ENCODE measurements at regions of chr10 and their contacts with region 1.

Region 1: DNA sequence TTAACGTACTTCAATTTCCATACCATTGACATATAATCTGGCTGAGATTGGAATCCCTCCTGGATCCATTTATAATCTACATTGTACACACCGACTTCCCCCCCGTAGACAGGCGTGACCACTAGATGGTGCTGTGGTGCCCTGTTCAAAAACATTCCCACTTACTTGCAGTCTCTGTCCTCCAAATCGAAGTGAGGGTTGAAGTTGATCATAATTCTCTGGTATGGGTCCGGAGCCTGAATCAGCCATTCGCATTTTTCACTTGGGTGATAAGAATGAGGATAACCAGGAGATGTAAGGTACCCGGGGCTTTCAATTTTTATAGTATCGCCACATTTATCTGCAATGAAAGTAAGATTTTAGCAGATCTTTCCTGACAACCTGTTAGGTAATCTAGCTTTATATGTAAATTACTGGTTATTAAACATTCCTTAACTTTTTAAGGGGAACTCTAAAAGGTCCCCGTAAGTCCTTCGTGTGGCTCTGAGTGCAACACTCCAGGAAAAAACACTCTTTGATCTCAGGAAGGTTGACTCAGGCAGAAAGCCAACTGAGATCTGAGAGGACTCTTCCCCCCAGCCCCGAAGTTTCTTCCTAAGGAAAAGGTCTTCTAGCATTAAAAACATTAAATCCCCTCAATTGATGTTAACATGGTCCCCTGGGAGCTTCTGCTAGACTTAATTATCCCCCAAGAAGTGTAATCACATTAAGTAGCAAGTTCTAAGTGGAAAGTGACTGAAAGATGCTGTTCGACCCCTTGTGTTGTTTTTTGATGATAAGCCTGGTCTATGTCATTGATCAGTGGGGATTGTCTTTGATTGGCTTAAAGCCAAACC is 3.7 kb downstream of the NRP1 start:
- DNase-seq: peak; percentile 87 to 89 (median 87)
- ATAC-seq: peak; percentile 9 to 35 (median 25)
- H3K4me3 ChIP-seq: peak overlapping the region; percentile 53 to 92 (median 88)
- H3K27ac ChIP-seq: peak overlapping the region in 11 of 12 donors; percentile 95 to 100 (median 98)
- H3K4me1 ChIP-seq: peaks cover 3 to 53% (median 40%) of the 10 kb centered on the region in 12 donors
- H3K27me3 ChIP-seq: no peaks in the 10 kb centered on the region
- CTCF ChIP-seq: peak; percentile 87 to 96 (median 91)
- POLR2A ChIP-seq: no peak

Region 2: GRCh38 chr10:33273295-33274002 is 57.3 kb before region 1 on chr10:
- intact Hi-C with region 1: loop called in 5 of 10 experiments (anchors 5 to 10 kb)
- DNase-seq: peak; percentile 87 to 95 (median 88)
- ATAC-seq: peak; percentile 89 to 96 (median 94)
- H3K4me3 ChIP-seq: peak overlapping the region in 10 of 12 donors; percentile 17 to 43 (median 36)
- H3K27ac ChIP-seq: peak overlapping the region; percentile 54 to 93 (median 88)
- H3K4me1 ChIP-seq: peaks cover 16 to 86% (median 68%) of the 10 kb centered on the region in 12 donors
- H3K27me3 ChIP-seq: no peaks in the 10 kb centered on the region
- CTCF ChIP-seq: peak in 4 of 12 donors; percentile 1 to 38 (median 28)
- POLR2A ChIP-seq: peak in 1 of 2 donors; percentile 49

Region 3: GRCh38 chr10:33674986-33675599 is 344.3 kb after region 1 on chr10:
- intact Hi-C with region 1: loop called in 2 of 10 experiments (anchors 5 to 10 kb)
- DNase-seq: peak in 1 of 5 donors; percentile 24
- ATAC-seq: peak in 3 of 4 donors; percentile 38 to 82 (median 51)
- H3K4me3 ChIP-seq: peak overlapping the region in 6 of 12 donors; percentile 8 to 46 (median 27)
- H3K27ac ChIP-seq: peak overlapping the region in 11 of 12 donors; percentile 12 to 78 (median 64)
- H3K4me1 ChIP-seq: peaks cover 0 to 28% (median 10%) of the 10 kb centered on the region in 12 donors
- H3K27me3 ChIP-seq: no peaks in the 10 kb centered on the region
- CTCF ChIP-seq: no peak
- POLR2A ChIP-seq: no peak

Region 4: DNA sequence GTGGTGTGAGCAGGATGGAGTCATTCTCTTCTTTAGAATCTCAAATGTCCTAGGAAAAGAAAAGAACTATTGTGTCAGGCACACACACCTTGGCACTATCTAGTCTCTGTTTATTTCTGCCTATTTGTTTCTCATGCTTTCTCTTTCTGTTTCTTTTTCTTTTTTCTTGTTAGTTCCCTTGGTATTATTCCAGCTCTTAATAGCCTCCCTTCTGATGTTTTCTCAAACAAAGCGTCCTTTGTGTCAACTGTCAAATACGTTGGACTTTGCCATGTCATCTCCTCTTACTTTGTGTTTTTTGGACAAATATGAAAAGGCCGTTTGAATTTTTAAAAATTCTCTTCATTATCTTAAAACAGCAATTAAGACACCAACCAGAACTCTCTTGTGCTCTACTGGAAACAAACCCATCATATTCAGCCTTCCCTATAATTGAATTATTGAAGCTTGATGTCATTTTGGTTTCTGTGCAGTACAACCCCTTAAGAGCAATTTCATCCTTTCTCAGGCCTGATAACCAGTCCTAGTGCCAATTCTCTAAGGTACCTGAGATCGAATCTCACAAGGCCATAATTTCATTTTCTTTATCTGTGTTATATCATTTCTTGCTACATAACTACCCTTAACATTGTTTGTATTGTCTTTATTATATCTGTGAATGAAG is 501.5 kb after region 1 on chr10:
- intact Hi-C with region 1: loop called in 1 of 10 experiments (anchors 10 kb)
- DNase-seq: no peak
- ATAC-seq: no peak
- H3K4me3 ChIP-seq: no peak overlapping the region
- H3K27ac ChIP-seq: no peak overlapping the region
- H3K4me1 ChIP-seq: no peaks in the 10 kb centered on the region
- H3K27me3 ChIP-seq: no peaks in the 10 kb centered on the region
- CTCF ChIP-seq: no peak
- POLR2A ChIP-seq: no peak

Region 5: DNA sequence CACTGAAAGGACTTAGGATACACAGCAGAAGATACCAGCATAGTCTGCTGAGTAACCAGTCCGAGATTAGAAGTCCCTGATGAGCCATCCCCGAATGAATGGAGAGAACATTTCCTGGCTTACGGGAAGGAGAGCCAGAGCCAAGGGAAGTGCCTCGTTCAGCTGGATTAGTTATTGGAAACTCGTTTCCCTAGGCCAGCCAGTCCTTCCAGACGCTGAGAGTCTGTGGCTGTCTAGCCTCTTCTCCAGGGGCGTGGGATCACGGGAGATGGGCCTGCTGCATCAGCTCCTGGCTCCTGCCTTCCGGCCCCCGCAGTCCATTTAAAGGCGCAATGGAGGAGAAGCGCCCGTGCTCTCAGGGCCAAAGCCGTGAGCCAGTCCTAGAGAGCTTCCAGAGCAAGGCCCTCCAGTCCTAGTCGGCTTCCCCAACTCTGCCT is 771.5 kb after region 1 on chr10:
- intact Hi-C with region 1: loop called in 1 of 10 experiments (anchors 10 kb)
- DNase-seq: peak; percentile 77 to 89 (median 80)
- ATAC-seq: peak; percentile 82 to 96 (median 94)
- H3K4me3 ChIP-seq: no peak overlapping the region
- H3K27ac ChIP-seq: peak overlapping the region in 9 of 12 donors; percentile 24 to 82 (median 65)
- H3K4me1 ChIP-seq: peaks cover 0 to 26% (median 0%) of the 10 kb centered on the region in 12 donors
- H3K27me3 ChIP-seq: no peaks in the 10 kb centered on the region
- CTCF ChIP-seq: no peak
- POLR2A ChIP-seq: no peak

Region 6: DNA sequence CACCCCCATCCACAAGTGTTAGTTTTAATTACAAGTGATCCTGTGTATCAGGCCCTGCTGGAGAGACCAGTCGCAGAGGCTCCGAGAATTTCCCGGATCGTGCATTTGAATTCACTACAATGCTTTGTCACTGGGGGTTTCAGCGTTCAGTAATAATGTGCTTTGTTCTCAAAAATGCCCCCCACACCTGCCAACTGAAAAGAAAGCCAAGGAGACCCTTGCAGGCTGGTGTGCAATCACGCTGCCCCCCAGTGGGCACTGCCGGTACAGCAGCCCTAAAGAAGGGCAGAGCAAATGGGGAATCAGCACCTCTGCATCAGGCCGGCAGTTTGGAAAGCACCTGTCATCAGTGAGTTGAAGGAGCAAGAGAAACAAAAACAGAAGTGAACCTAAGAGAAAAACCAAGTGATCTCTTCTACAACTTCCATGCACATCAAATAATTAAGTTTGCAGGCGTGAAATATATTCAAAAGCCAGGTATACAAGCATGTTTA is 1306.7 kb after region 1 on chr10:
- intact Hi-C with region 1: loop called in 9 of 10 experiments (anchors 2 to 10 kb)
- DNase-seq: peak; percentile 28 to 75 (median 64)
- ATAC-seq: peak; percentile 25 to 72 (median 58)
- H3K4me3 ChIP-seq: no peak overlapping the region
- H3K27ac ChIP-seq: no peak overlapping the region
- H3K4me1 ChIP-seq: peaks cover 0 to 25% (median 17%) of the 10 kb centered on the region in 12 donors
- H3K27me3 ChIP-seq: no peaks in the 10 kb centered on the region
- CTCF ChIP-seq: peak; percentile 91 to 97 (median 94)
- POLR2A ChIP-seq: no peak